ENCODE measurements at regions of chr1 and their contacts with region 1.

Region 1: DNA sequence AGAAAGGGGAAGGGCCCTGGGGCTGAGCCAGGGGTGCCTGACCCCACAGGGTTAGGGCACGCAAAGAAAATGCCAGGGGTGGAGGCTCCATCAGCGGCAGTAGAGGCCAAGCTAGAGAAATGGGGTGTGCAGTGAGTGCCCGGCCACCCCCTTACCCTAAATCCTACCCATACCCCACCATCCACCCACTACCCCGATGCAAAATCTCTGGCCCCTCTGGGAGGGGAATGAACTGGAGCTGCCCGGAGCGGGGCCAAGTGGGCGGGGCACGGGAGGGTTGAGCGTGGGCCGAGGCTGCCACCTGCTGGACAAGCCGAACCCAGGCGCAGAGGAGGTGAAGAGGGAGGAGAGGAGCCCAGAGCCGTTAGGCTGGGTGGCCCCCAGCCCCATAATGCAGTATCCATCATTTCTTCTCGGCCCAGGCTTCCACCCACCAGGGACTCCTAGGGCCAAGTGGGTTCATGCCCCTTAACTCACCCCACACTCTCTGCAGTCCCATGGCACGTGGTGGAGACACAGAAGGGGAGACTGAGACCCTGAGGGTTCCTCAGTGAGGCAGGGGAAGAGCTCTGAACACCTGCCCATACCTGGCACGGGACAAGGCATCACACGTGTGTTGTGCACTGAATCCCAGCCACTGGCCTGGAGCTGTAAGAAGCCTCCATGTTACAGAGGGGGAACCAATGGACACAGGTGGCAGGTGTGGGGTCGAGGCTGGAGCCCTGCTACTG is 1.4 kb upstream of the C1QC start:
- DNase-seq: peak; percentile 83 to 94 (median 92)
- ATAC-seq: peak; percentile 95
- H3K4me3 ChIP-seq: no peak overlapping the region
- H3K27ac ChIP-seq: no peak overlapping the region
- H3K4me1 ChIP-seq: peaks cover 0 to 13% of the 10 kb centered on the region in 2 experiments; a peak in 3 of 5 replicates
- H3K27me3 ChIP-seq: peaks cover 1 to 42% of the 10 kb centered on the region in 2 experiments; a peak in 3 of 5 replicates
- CTCF ChIP-seq: peak; percentile 89 to 94 (median 94)
- EP300 ChIP-seq: no peak
- POLR2A ChIP-seq: no peak
- RAD21 ChIP-seq: peak; percentile 94 to 98

Region 2: GRCh38 chr1:22457345-22457744 is 184.7 kb before region 1 on chr1:
- CTCF ChIA-PET with region 1: no interaction called
- POLR2A ChIA-PET with region 1: no interaction called
- in situ Hi-C with region 1: no loop called
- intact Hi-C with region 1: no loop called
- DNase-seq: no peak
- ATAC-seq: no peak
- H3K4me3 ChIP-seq: no peak overlapping the region
- H3K27ac ChIP-seq: no peak overlapping the region
- H3K4me1 ChIP-seq: peaks cover 4 to 38% of the 10 kb centered on the region in 2 experiments; a peak in 4 of 5 replicates
- H3K27me3 ChIP-seq: no peaks in the 10 kb centered on the region
- CTCF ChIP-seq: no peak
- EP300 ChIP-seq: no peak
- POLR2A ChIP-seq: no peak
- RAD21 ChIP-seq: no peak

Region 3: DNA sequence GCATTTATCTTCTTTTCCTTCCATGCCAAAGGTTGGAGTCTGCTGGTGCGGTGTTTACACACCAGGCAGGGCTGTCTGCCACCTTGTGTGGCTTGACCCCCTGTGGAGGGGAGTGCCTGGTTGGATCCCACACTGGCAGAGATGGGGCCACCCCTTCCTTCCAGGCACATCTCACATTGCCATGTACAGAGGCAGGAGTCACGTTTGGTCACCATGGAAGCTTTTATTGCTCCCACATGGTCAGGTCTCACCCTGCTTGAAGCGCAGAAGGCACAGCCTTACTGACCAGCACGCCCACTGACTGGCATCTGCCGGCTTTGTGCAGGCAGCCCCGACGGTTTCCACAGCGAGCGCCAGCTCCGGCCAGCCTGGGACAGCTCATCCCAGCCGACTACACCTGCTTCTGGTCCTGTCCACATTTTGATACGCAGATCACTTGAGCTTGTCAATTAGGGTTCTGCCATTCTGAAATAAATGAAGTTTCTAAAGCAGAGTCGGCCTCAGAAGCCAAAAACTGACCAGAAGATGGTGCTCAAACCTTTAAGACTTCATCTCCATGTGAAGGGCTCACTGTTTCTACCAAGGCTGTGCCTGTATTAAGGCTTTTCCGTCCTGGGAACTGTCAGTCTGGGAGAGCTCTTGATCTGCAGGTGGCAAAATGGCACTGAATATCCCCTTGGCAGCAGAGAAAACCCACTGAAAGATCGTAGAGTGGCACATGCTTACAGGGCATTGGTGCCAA is 114.3 kb before region 1 on chr1:
- CTCF ChIA-PET with region 1: interaction called, 3 read pairs
- POLR2A ChIA-PET with region 1: no interaction called
- in situ Hi-C with region 1: no loop called
- intact Hi-C with region 1: loop called (anchors 5 kb)
- DNase-seq: no peak
- ATAC-seq: no peak
- H3K4me3 ChIP-seq: no peak overlapping the region
- H3K27ac ChIP-seq: no peak overlapping the region
- H3K4me1 ChIP-seq: peaks cover 0 to 2% of the 10 kb centered on the region in 2 experiments; a peak in 1 of 5 replicates
- H3K27me3 ChIP-seq: no peaks in the 10 kb centered on the region
- CTCF ChIP-seq: peak in 1 of 3 experiments; percentile 19; a peak in 1 of 6 replicates
- EP300 ChIP-seq: no peak
- POLR2A ChIP-seq: no peak
- RAD21 ChIP-seq: peak in 1 of 2 experiments; percentile 32; a peak in 1 of 4 replicates

Region 4: GRCh38 chr1:22545141-22545540 is 96.9 kb before region 1 on chr1:
- CTCF ChIA-PET with region 1: no interaction called
- POLR2A ChIA-PET with region 1: no interaction called
- in situ Hi-C with region 1: no loop called
- intact Hi-C with region 1: loop called (anchors 5 kb)
- DNase-seq: no peak
- ATAC-seq: no peak
- H3K4me3 ChIP-seq: no peak overlapping the region
- H3K27ac ChIP-seq: no peak overlapping the region
- H3K4me1 ChIP-seq: 0 out of 5 replicates have a peak, but pooled peaks cover 0 to 2% of the 10 kb centered on the region in 2 experiments
- H3K27me3 ChIP-seq: peaks cover 47 to 83% of the 10 kb centered on the region in 2 experiments; a peak in 4 of 5 replicates
- CTCF ChIP-seq: no peak
- EP300 ChIP-seq: no peak
- POLR2A ChIP-seq: no peak
- RAD21 ChIP-seq: no peak

Region 5: GRCh38 chr1:22625262-22625925 is 16.7 kb before region 1 on chr1:
- CTCF ChIA-PET with region 1: no interaction called
- POLR2A ChIA-PET with region 1: interaction called, 5 read pairs
- in situ Hi-C with region 1: no loop called
- intact Hi-C with region 1: loop called (anchors 1 kb)
- DNase-seq: no peak
- ATAC-seq: no peak
- H3K4me3 ChIP-seq: no peak overlapping the region
- H3K27ac ChIP-seq: no peak overlapping the region
- H3K4me1 ChIP-seq: no peaks in the 10 kb centered on the region
- H3K27me3 ChIP-seq: peaks cover 13 to 73% of the 10 kb centered on the region in 2 experiments
- CTCF ChIP-seq: no peak
- EP300 ChIP-seq: no peak
- POLR2A ChIP-seq: no peak
- RAD21 ChIP-seq: no peak

Measured in K562 (cell line).